Esophagus squamous epithelium (tissue), 5 donors: ENCODE measurements at regions of chr12 and their contacts with region 1.

Region 1: GRCh38 chr12:4857472-4858291 is 52.0 kb upstream of the KCNA1 start:
- DNase-seq: no peak
- H3K4me3 ChIP-seq: peak overlapping the region in 2 of 4 donors; percentile 14 to 53
- H3K27ac ChIP-seq: no peak overlapping the region
- H3K4me1 ChIP-seq: peaks cover 6 to 15% (median 7%) of the 10 kb centered on the region in 3 donors
- H3K27me3 ChIP-seq: peaks cover 0 to 84% (median 0%) of the 10 kb centered on the region in 4 donors
- CTCF ChIP-seq: peak; percentile 69 to 91 (median 78)
- POLR2A ChIP-seq: no peak

Region 2: DNA sequence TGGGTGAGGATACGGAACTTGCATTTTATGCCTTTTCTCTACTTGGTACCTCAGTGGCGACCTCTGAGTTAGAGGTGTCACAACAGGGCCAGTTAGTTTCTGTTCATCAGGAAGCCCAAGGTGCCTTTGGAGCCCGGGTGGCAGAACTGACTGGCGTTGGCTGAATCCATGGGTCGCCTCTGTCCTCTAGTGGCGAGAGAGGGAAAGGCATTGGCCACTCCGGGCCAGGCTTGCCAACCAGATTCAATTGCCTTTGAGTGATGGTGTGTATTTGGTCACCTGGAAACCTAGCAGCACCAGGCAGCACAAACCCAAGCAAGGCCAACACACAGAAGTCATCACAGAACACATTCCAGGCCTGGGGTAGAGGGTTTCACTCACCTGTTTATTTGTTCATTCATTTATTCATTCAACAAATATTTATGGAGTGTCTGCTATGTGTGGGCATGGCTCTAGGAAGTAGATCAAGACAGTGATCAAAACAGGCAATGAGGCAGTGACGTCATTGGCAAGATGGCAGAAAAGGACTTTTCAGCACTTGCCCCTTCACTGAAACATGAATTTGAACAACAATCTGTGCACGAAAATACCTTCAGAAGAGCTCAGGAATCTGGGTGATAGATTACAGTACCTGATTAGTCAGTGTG is 145.5 kb after region 1 on chr12:
- intact Hi-C with region 1: loop called (anchors 5 kb)
- DNase-seq: no peak
- H3K4me3 ChIP-seq: no peak overlapping the region
- H3K27ac ChIP-seq: no peak overlapping the region
- H3K4me1 ChIP-seq: peaks cover 0 to 3% (median 1%) of the 10 kb centered on the region in 3 donors
- H3K27me3 ChIP-seq: peaks cover 0 to 61% (median 2%) of the 10 kb centered on the region in 4 donors
- CTCF ChIP-seq: peak; percentile 37 to 92 (median 84)
- POLR2A ChIP-seq: no peak

Region 3: DNA sequence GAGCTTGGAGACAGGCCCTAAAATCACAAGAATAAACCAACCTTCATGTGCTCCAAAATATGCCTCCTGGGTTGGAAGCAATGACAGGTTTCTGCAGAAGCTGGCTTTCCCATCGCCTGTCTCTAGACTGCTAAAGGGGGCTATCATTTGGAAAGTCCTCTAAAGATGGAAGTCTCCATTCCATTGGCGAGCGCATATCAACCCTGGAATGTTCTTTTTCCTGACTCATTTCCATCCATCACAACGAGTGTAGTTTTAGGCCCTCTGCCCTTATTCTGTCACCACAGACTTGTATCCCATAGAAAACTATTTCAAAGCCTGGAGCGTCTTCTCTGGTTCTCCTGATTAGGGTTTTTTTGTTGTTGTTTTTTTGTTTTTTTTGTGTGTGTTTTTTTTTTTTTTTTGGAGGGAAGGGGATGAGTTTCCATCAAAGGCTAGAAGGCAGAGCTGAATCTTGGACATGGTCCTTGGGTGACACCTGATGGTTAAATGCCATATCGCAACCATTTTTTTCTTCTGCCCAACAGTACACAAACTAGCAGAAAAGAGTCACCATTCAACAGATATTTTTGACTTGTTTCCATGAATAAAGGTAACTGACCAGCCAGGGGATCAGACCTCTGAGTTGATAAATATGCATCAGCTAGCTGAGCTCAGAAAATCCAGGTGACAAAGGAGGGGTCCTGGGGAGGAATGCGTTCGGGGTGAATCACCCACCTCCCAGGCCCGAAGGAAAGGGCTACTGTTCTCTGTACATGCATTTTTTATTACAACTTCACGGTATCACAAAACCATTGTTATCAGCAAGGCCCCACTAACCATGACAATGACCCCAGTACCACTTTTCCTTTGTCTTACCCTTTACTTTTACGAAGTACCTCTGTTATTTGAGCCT is 226.5 kb after region 1 on chr12:
- intact Hi-C with region 1: loop called (anchors 5 kb)
- DNase-seq: no peak
- H3K4me3 ChIP-seq: no peak overlapping the region
- H3K27ac ChIP-seq: no peak overlapping the region
- H3K4me1 ChIP-seq: no peaks in the 10 kb centered on the region
- H3K27me3 ChIP-seq: peaks cover 0 to 78% (median 0%) of the 10 kb centered on the region in 4 donors
- CTCF ChIP-seq: peak; percentile 42 to 68 (median 60)
- POLR2A ChIP-seq: no peak